A549 (cell line): ENCODE measurements at regions of chr10 and their contacts with region 1.

Region 1: GRCh38 chr10:73940634-73941221 is 29.8 kb downstream of the PLAU start:
- DNase-seq: peak; percentile 73
- ATAC-seq: peak; percentile 96 to 98
- H3K4me3 ChIP-seq: no peak overlapping the region
- H3K27ac ChIP-seq: peak overlapping the region; percentile 82 to 86
- H3K4me1 ChIP-seq: peaks cover 24% of the 10 kb centered on the region
- CTCF ChIP-seq: peak; percentile 96
- EP300 ChIP-seq: no peak
- POLR2A ChIP-seq: no peak
- RAD21 ChIP-seq: peak; percentile 97 to 100

Region 2: DNA sequence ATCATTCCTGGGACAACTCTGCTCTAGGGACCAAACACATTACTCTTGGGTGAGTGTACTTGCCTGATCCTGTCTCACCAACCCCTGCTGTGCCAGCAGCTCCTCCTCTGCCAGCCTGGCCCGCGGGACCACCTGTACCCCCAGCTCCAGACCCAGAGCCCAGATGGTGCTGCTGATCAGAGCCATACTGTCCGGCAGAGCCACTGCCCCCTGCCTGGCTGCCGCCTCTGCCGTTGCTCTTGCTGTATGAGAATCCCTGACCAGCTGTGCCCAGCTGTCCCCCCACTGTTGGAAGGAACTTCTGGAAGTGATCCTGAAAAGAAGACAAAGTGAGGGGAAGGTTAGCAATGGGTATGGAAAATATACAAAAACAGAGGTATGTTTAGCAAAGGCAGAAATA is 306.3 kb before region 1 on chr10:
- CTCF ChIA-PET with region 1: no interaction called
- POLR2A ChIA-PET with region 1: no interaction called
- DNase-seq: no peak
- ATAC-seq: peak in 1 of 2 experiments; percentile 27; a peak in 2 of 6 replicates
- H3K4me3 ChIP-seq: no peak overlapping the region
- H3K27ac ChIP-seq: no peak overlapping the region
- H3K4me1 ChIP-seq: no peaks in the 10 kb centered on the region
- CTCF ChIP-seq: no peak
- EP300 ChIP-seq: no peak
- POLR2A ChIP-seq: no peak
- RAD21 ChIP-seq: no peak

Region 3: DNA sequence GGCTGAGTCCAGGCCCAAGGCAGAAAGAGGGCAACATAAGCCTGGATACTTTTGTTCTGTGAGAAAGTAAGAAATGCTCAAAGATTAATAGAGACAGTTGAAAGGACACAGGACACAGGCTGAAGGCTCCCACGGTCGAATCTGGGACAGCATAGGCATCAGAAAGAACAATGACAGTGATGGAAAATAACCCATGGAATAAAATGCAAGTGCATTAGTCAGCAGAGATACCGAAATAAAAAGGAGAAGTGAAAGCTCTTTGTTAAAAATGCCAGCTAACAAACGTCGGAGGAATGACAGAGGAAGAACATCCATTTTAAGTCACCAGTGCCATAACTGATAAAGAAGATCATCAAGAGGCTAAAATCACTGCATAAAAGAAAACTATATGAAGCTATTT is 223.2 kb before region 1 on chr10:
- CTCF ChIA-PET with region 1: no interaction called
- POLR2A ChIA-PET with region 1: no interaction called
- DNase-seq: no peak
- ATAC-seq: no peak
- H3K4me3 ChIP-seq: no peak overlapping the region
- H3K27ac ChIP-seq: no peak overlapping the region
- H3K4me1 ChIP-seq: no peaks in the 10 kb centered on the region
- CTCF ChIP-seq: no peak
- EP300 ChIP-seq: no peak
- POLR2A ChIP-seq: no peak
- RAD21 ChIP-seq: no peak

Region 4: GRCh38 chr10:73769396-73769795 is 171.3 kb before region 1 on chr10:
- CTCF ChIA-PET with region 1: no interaction called
- POLR2A ChIA-PET with region 1: no interaction called
- DNase-seq: no peak
- ATAC-seq: no peak
- H3K4me3 ChIP-seq: no peak overlapping the region
- H3K27ac ChIP-seq: no peak overlapping the region
- H3K4me1 ChIP-seq: peaks cover 17% of the 10 kb centered on the region
- CTCF ChIP-seq: no peak
- EP300 ChIP-seq: no peak
- POLR2A ChIP-seq: no peak
- RAD21 ChIP-seq: no peak

Region 5: GRCh38 chr10:73848821-73849489 is 91.8 kb before region 1 on chr10:
- CTCF ChIA-PET with region 1: interaction called, 87 read pairs
- POLR2A ChIA-PET with region 1: no interaction called
- DNase-seq: peak; percentile 78 to 94
- ATAC-seq: peak; percentile 92 to 97
- H3K4me3 ChIP-seq: no peak overlapping the region
- H3K27ac ChIP-seq: no peak overlapping the region
- H3K4me1 ChIP-seq: peaks cover 7% of the 10 kb centered on the region; the same call in 1 of the 3 replicates
- CTCF ChIP-seq: peak; percentile 94
- EP300 ChIP-seq: no peak
- POLR2A ChIP-seq: no peak
- RAD21 ChIP-seq: peak; percentile 93 to 97

Region 6: GRCh38 chr10:73874267-73875138 is 66.2 kb before region 1 on chr10 and contains the start of gene CAMK2G:
- CTCF ChIA-PET with region 1: interaction called, 936 read pairs
- POLR2A ChIA-PET with region 1: no interaction called
- DNase-seq: peak; percentile 81
- ATAC-seq: peak; percentile 91 to 93
- H3K4me3 ChIP-seq: peak within 1 kb of the TSS; percentile 90
- H3K27ac ChIP-seq: peak within 1 kb of the TSS; percentile 76 to 96
- H3K4me1 ChIP-seq: peaks cover 31% of the 10 kb centered on the region
- CTCF ChIP-seq: no peak
- EP300 ChIP-seq: no peak
- POLR2A ChIP-seq: peak; percentile 78
- RAD21 ChIP-seq: no peak
- polyA plus RNA-seq, gene CAMK2G: 22.6 and 27.5 TPM in 2 replicates

Region 7: DNA sequence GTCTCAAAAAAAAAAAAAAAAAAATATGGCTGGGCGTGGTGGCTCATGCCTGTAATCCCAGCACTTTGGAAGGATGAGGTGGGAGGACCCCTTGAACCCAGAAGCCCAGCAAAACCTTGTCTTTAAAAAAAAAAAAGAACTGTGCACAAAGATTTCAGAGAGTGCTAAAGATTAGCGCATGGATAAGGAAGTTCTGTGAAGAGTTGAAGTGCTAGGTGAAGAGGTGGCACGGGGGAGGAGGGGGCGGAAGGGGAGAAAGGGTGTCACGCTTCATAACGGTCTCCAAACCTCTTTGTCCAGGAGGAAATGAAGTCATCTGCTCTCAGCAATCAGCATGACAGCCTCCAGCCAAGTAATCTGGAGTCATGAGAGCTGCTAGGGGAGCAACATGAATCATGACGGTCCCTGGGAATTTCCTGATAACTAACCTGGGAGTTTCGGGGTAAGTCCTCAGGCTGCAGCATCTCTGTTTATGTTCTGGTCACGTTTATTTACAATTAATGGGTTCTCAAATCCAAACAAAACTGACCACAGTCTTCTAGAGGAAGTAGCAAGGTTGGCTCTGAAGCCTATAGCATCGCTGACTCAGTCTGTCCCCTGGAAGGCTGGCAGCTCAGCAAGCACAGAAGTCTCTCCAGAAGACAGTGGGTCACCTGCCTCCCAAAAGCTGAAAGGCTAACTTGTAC is 31.7 kb before region 1 on chr10:
- CTCF ChIA-PET with region 1: interaction called, 196 read pairs
- POLR2A ChIA-PET with region 1: interaction called, 3 read pairs
- DNase-seq: peak; percentile 81 to 93
- ATAC-seq: peak; percentile 51; a peak in 5 of 6 replicates
- H3K4me3 ChIP-seq: peak overlapping the region; percentile 60; the same call in 2 of the 3 replicates
- H3K27ac ChIP-seq: peak overlapping the region; percentile 91 to 96
- H3K4me1 ChIP-seq: peaks cover 79% of the 10 kb centered on the region
- CTCF ChIP-seq: no peak
- EP300 ChIP-seq: peak; percentile 55 to 74; a peak in 3 of 5 replicates
- POLR2A ChIP-seq: no peak
- RAD21 ChIP-seq: peak in 1 of 2 experiments; percentile 13; a peak in 1 of 5 replicates

Region 8: GRCh38 chr10:73965890-73966768 is 25.4 kb after region 1 on chr10:
- CTCF ChIA-PET with region 1: interaction called, 23 read pairs
- POLR2A ChIA-PET with region 1: interaction called, 3 read pairs
- DNase-seq: peak; percentile 81 to 97
- ATAC-seq: peak; percentile 97 to 98
- H3K4me3 ChIP-seq: 0 out of 3 replicates have a peak overlapping the region, but pooled peaks have one; percentile 5
- H3K27ac ChIP-seq: peak overlapping the region; percentile 91 to 94
- H3K4me1 ChIP-seq: peaks cover 35% of the 10 kb centered on the region
- CTCF ChIP-seq: no peak
- EP300 ChIP-seq: peak in 1 of 2 experiments; percentile 54; a peak in 1 of 5 replicates
- POLR2A ChIP-seq: peak; percentile 43
- RAD21 ChIP-seq: peak in 1 of 2 experiments; percentile 10; a peak in 1 of 5 replicates

Region 9: DNA sequence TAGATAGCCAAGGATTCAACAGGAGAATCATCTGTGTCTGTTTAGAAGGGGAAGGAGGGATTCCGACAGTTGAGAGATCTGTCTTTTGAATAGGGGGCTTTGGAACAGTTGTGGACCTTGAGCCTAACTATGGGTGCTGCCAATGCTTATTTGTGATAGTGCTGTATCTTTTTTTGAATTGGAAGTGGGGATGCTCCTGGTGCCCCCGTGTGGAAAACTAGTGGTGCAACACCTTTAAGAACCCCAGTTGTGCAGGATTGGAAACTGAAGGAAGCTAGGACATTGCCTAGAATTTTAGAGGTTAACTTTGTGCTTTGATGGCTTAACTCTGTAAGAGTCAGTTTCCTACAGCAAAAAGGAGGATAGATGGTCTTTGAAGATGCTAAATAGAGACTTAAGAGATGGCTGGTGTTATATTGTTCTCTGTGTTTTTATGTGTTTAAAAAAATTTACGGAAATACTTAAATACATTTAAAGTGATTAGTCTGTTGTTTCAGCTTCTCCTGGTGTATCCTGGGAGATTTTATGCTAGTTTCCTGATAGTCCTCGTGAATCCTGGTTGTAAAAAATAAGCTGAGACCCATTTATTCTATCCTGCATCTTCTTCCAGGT is 140.6 kb after region 1 on chr10:
- CTCF ChIA-PET with region 1: interaction called, 24 read pairs
- POLR2A ChIA-PET with region 1: no interaction called
- DNase-seq: peak; percentile 64 to 83
- ATAC-seq: peak; percentile 76 to 81; a peak in 5 of 6 replicates
- H3K4me3 ChIP-seq: no peak overlapping the region
- H3K27ac ChIP-seq: peak overlapping the region; percentile 77 to 80
- H3K4me1 ChIP-seq: peaks cover 67% of the 10 kb centered on the region
- CTCF ChIP-seq: peak; percentile 77
- EP300 ChIP-seq: no peak
- POLR2A ChIP-seq: no peak
- RAD21 ChIP-seq: peak; percentile 79 to 84